ENCODE measurements at regions of chr20 and their contacts with region 1.

Region 1: GRCh38 chr20:34129518-34130162 is 17.6 kb upstream of the EIF2S2 start:
- DNase-seq: peak; percentile 68
- ATAC-seq: peak; percentile 90
- H3K4me3 Mint-ChIP-seq: no peak overlapping the region
- H3K27ac Mint-ChIP-seq: no peak overlapping the region
- H3K4me1 Mint-ChIP-seq: peaks cover 8% of the 10 kb centered on the region
- H3K27me3 Mint-ChIP-seq: peaks cover 5% of the 10 kb centered on the region

Region 2: DNA sequence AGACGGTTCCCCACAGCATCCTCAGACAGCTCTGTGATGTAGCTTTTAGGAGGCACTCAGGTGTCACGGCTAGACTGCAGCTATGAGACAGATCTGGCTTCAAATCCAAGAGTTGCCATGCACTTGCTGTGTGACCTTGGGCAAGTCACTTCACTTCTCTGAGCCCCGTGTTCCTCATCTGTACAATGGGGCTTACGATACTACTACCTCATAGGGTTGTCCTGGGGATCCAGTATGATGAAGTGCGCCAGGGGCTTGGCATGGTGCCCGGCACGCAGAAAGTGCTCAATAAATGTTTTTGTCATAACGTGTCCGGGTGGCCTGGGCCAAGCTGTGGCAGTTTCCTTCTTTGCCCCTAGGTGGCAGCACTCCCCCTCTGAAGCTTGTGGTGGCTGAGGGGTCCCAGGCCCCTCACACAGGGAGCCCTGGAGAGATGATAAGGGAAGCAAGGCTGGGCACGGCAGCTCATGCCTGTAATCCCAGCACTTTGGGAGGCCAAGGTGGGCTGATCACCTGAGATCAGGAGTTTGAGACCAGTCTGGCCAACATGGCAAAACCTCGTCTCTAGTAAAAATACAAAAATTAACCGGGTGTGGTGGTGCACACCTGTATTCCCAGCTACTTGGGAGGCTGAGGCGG is 337.6 kb before region 1 on chr20:
- CTCF ChIA-PET with region 1: interaction called, 4 read pairs
- POLR2A ChIA-PET with region 1: no interaction called
- intact Hi-C with region 1: loop called in 1 of 2 experiments (anchors 1 kb)
- DNase-seq: peak; percentile 70
- ATAC-seq: peak; percentile 79
- H3K4me3 Mint-ChIP-seq: no peak overlapping the region
- H3K27ac Mint-ChIP-seq: no peak overlapping the region
- H3K4me1 Mint-ChIP-seq: peaks cover 3% of the 10 kb centered on the region
- H3K27me3 Mint-ChIP-seq: no peaks in the 10 kb centered on the region

Region 3: GRCh38 chr20:33915726-33916331 is 213.8 kb before region 1 on chr20:
- CTCF ChIA-PET with region 1: interaction called, 11 read pairs
- POLR2A ChIA-PET with region 1: no interaction called
- intact Hi-C with region 1: loop called in 1 of 2 experiments (anchors 1 kb)
- DNase-seq: peak; percentile 76
- ATAC-seq: peak; percentile 66
- H3K4me3 Mint-ChIP-seq: no peak overlapping the region
- H3K27ac Mint-ChIP-seq: no peak overlapping the region
- H3K4me1 Mint-ChIP-seq: peaks cover 15% of the 10 kb centered on the region
- H3K27me3 Mint-ChIP-seq: no peaks in the 10 kb centered on the region

Region 4: GRCh38 chr20:33947709-33948295 is 181.8 kb before region 1 on chr20:
- CTCF ChIA-PET with region 1: interaction called, 3 read pairs
- POLR2A ChIA-PET with region 1: no interaction called
- intact Hi-C with region 1: loop called (anchors 1 kb)
- DNase-seq: peak; percentile 76
- ATAC-seq: peak; percentile 84
- H3K4me3 Mint-ChIP-seq: no peak overlapping the region
- H3K27ac Mint-ChIP-seq: no peak overlapping the region
- H3K4me1 Mint-ChIP-seq: no peaks in the 10 kb centered on the region
- H3K27me3 Mint-ChIP-seq: peaks cover 4% of the 10 kb centered on the region

Region 5: GRCh38 chr20:34058831-34059230 is 70.8 kb before region 1 on chr20:
- CTCF ChIA-PET with region 1: no interaction called
- POLR2A ChIA-PET with region 1: no interaction called
- intact Hi-C with region 1: no loop called
- DNase-seq: peak; percentile 14
- ATAC-seq: peak; percentile 60
- H3K4me3 Mint-ChIP-seq: no peak overlapping the region
- H3K27ac Mint-ChIP-seq: no peak overlapping the region
- H3K4me1 Mint-ChIP-seq: peaks cover 76% of the 10 kb centered on the region
- H3K27me3 Mint-ChIP-seq: no peaks in the 10 kb centered on the region

Region 6: GRCh38 chr20:34083137-34083536 is 46.5 kb before region 1 on chr20:
- CTCF ChIA-PET with region 1: no interaction called
- POLR2A ChIA-PET with region 1: no interaction called
- intact Hi-C with region 1: loop called in 1 of 2 experiments (anchors 5 kb)
- DNase-seq: no peak
- ATAC-seq: no peak
- H3K4me3 Mint-ChIP-seq: no peak overlapping the region
- H3K27ac Mint-ChIP-seq: no peak overlapping the region
- H3K4me1 Mint-ChIP-seq: no peaks in the 10 kb centered on the region
- H3K27me3 Mint-ChIP-seq: no peaks in the 10 kb centered on the region